MCF 10A (cell line): ENCODE measurements at regions of chr12 and their contacts with region 1.

Region 1: DNA sequence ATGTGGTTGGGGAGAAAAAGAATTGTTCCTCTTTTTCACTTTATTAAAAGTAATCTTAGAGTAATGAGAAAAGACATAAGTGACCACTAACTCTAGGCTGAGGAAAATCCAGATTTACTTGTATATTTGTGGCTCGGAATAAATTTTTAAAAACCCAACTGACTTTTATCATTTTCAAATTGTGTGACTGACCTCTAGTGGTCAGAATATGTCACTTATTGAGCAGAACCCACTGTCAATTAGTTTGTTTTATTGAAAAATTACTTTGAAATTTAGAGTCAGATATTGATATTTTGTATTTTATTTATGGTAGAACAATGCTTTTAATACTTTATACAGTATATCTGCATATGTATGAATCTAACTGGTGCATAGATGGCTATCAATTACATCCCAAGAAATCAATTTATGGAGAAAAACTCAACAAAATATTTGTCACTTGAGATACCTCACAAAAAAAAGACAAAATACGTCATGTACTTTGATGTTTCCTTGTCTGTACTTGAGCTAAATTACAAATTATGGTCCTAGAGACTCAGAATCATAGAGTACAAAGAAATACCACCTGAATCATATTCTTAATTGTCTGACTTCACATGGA is 229.4 kb downstream of the CNTN1 start:
- DNase-seq: peak; percentile 26
- H3K4me3 Mint-ChIP-seq: no peak overlapping the region
- H3K27ac Mint-ChIP-seq: no peak overlapping the region
- H3K4me1 Mint-ChIP-seq: no peaks in the 10 kb centered on the region
- H3K27me3 Mint-ChIP-seq: peaks cover 63% of the 10 kb centered on the region
- CTCF ChIP-seq: peak; percentile 62

Region 2: DNA sequence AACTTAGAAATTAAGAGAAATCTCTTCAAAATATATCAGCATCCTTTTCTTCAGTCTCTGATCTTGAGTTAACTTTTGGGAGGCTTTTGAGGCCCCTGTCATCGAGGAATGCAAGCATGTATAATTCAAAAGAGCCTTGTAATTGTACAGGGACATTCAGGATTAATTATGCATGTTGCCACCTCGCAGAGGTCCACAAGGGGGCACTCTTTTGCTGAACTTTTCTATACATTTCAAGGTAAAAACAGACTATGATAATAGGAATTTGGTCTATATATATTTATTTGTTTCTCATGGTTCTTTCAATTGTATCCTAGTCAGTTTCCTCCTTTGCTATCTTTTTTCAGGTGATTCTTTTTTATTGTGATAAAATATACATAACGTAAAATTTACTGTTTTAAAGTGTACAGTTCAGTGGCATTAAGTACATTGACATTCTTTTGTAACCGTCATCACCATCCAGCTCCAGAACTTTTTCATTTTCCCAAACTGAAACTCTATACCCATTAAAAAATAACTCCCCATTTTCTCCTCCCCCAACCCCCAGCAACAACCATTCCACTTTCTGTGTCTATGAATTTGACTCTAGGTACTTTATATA is 768.8 kb before region 1 on chr12:
- CTCF ChIA-PET with region 1: no interaction called
- POLR2A ChIA-PET with region 1: no interaction called
- intact Hi-C with region 1: loop called (anchors 5 kb)
- DNase-seq: peak; percentile 72
- H3K4me3 Mint-ChIP-seq: no peak overlapping the region
- H3K27ac Mint-ChIP-seq: no peak overlapping the region
- H3K4me1 Mint-ChIP-seq: peaks cover 28% of the 10 kb centered on the region
- H3K27me3 Mint-ChIP-seq: no peaks in the 10 kb centered on the region
- CTCF ChIP-seq: peak; percentile 74

Region 3: DNA sequence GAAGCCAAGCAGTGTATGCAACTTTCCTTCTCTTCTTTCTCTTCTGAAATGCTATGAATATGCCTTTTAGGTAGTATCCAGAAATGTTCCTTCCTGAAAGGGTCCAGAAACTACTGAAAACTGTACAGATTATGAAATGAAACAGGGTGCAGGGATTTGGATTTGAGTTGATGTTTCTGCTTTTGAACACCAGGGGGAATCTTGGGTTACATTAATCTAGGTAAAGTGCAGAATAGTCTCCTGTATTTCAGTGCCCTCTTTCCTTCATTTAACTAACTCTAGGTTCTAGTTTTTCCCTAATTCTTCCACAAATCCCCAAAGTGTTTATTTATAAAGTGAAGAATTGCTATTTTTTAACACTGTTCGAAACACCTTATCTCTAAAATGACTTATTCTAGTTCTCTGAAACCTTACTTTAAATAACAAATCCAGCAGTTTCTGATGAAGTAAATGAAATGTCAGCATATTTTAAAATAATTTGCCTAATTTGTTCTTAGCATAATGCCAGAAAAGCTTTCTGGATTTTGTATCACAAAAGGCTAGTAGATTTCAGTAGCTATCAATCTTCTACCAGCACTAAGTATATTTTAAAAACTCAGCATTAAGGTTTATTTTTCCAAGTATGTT is 585.0 kb before region 1 on chr12:
- CTCF ChIA-PET with region 1: interaction called, 4 read pairs
- POLR2A ChIA-PET with region 1: no interaction called
- intact Hi-C with region 1: loop called (anchors 5 kb)
- DNase-seq: peak; percentile 34
- H3K4me3 Mint-ChIP-seq: no peak overlapping the region
- H3K27ac Mint-ChIP-seq: no peak overlapping the region
- H3K4me1 Mint-ChIP-seq: peaks cover 5% of the 10 kb centered on the region
- H3K27me3 Mint-ChIP-seq: no peaks in the 10 kb centered on the region
- CTCF ChIP-seq: peak; percentile 54

Region 4: DNA sequence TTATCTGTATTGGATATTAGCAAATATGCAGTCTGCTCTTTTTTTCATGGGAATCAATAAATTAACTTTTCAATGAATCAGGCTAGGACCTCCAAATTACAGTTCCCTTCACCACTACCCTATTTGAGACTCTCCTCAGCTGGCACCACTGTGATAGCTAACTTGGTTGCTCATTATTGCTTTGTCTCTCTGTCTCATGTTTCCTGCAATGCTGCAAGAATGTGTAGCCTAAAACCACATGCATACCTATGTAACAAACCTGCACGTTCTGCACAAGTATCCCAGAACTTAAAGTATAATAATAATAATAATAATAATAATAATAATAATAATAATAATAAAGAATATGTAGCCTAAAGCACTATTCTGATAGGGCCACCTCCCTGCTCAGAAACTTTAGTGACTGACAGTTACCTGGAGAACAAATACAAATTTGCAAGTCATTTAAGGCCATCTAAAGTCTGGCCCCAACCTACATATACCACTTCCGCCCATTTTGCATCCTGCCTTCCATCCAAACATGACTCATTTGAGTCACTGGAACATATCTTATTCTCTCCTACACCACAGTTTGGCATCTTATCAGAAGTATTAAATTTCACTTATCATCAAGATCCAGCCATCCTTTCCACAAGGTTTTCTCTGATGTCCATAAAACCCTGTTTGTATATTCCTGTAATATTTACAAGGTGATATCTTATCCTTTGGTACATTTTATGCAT is 481.7 kb before region 1 on chr12:
- CTCF ChIA-PET with region 1: no interaction called
- POLR2A ChIA-PET with region 1: no interaction called
- intact Hi-C with region 1: loop called (anchors 5 kb)
- DNase-seq: peak; percentile 9
- H3K4me3 Mint-ChIP-seq: no peak overlapping the region
- H3K27ac Mint-ChIP-seq: no peak overlapping the region
- H3K4me1 Mint-ChIP-seq: peaks cover 7% of the 10 kb centered on the region
- H3K27me3 Mint-ChIP-seq: peaks cover 54% of the 10 kb centered on the region
- CTCF ChIP-seq: no peak

Region 5: GRCh38 chr12:40622246-40622838 is 299.3 kb before region 1 on chr12:
- CTCF ChIA-PET with region 1: interaction called, 25 read pairs
- POLR2A ChIA-PET with region 1: no interaction called
- intact Hi-C with region 1: loop called (anchors 1 kb)
- DNase-seq: peak; percentile 62
- H3K4me3 Mint-ChIP-seq: no peak overlapping the region
- H3K27ac Mint-ChIP-seq: no peak overlapping the region
- H3K4me1 Mint-ChIP-seq: no peaks in the 10 kb centered on the region
- H3K27me3 Mint-ChIP-seq: peaks cover 17% of the 10 kb centered on the region
- CTCF ChIP-seq: peak; percentile 71

Region 6: GRCh38 chr12:40745386-40745785 is 176.3 kb before region 1 on chr12:
- CTCF ChIA-PET with region 1: interaction called, 3 read pairs
- POLR2A ChIA-PET with region 1: no interaction called
- intact Hi-C with region 1: loop called (anchors 2 kb)
- DNase-seq: peak; percentile 8
- H3K4me3 Mint-ChIP-seq: no peak overlapping the region
- H3K27ac Mint-ChIP-seq: no peak overlapping the region
- H3K4me1 Mint-ChIP-seq: no peaks in the 10 kb centered on the region
- H3K27me3 Mint-ChIP-seq: peaks cover 42% of the 10 kb centered on the region
- CTCF ChIP-seq: no peak